ENCODE measurements at regions of chr17 and their contacts with region 1.

Region 1: GRCh38 chr17:29807520-29808351 is 122.3 kb downstream of the SSH2 start:
- DNase-seq: peak; percentile 74
- H3K4me3 ChIP-seq: no peak overlapping the region
- H3K27ac ChIP-seq: no peak overlapping the region
- H3K4me1 ChIP-seq: peaks cover 0 to 4% (median 2%) of the 10 kb centered on the region in 4 donors
- H3K27me3 ChIP-seq: no peaks in the 10 kb centered on the region
- CTCF ChIP-seq: peak; percentile 73 to 83 (median 77)
- EP300 ChIP-seq: no peak
- POLR2A ChIP-seq: no peak

Region 2: DNA sequence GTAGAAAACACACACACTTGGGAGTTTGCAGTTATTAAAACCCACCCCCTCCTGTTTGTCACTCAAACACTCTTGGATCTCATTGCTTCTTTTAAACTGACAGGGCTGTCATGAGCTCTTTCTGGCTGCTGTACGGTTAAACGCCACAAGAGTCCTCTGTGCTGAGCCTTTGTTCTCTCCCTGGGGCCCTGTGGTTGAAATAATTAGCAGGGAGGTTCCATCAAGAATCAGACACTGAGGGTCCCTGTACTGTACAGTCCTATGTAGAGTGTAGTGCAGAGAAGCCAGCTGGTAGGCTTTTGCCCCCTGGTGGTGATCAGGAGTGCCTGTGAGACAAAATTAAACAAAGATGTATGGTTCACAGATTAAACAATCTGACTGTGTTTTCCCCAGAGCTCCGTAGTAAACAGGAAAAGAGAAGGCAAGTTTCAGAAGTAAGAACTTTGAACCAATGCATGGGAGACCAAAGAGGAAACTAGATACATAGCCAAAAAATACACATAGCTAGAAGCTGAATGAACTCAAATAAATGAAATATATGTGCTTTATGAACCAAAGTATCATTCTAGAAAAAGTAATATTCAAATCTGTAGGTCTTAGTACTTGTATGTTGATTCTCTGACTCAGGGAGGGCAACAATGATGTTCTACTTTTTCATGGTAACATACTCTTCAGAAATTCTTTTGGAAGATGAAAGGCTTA is 123.6 kb after region 1 on chr17:
- in situ Hi-C with region 1: loop called (anchors 5 to 10 kb)
- intact Hi-C with region 1: loop called (anchors 2 kb)
- DNase-seq: peak; percentile 70
- H3K4me3 ChIP-seq: peak overlapping the region in 2 of 4 donors; percentile 67 to 70
- H3K27ac ChIP-seq: peak overlapping the region; percentile 88 to 99 (median 94)
- H3K4me1 ChIP-seq: peaks cover 5 to 36% (median 27%) of the 10 kb centered on the region in 4 donors
- H3K27me3 ChIP-seq: no peaks in the 10 kb centered on the region
- CTCF ChIP-seq: peak; percentile 87 to 89 (median 88)
- EP300 ChIP-seq: no peak
- POLR2A ChIP-seq: no peak

Region 3: DNA sequence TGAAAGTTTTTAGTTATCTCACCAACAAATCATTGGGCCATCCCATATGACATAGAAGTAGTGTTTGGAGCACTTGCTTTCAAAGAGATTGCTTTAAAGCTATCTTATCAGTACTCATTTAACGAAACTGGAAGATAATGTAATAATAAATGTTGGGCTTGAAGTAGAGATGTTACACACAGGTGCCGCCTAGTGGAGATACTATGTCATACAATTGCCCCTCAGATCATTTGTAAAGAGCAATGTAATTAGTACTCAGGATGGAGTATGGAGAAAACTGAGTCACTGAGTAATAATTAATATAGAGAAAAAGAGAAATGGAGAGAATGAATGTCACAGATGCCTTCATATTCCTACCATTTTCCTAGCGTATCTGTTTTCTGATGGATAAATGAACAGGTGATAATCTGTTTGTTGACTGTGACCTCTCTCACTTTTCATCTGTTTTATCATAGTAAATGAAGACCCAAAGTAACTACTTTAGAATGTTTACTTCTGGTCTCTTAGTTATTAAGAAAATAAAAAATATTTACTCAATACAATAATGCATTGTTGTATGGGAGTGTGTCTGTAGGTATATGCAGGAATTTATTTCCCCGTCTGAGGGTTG is 214.1 kb after region 1 on chr17:
- in situ Hi-C with region 1: loop called in 1 of 4 experiments (anchors 10 kb)
- intact Hi-C with region 1: no loop called
- DNase-seq: no peak
- H3K4me3 ChIP-seq: no peak overlapping the region
- H3K27ac ChIP-seq: no peak overlapping the region
- H3K4me1 ChIP-seq: no peaks in the 10 kb centered on the region
- H3K27me3 ChIP-seq: no peaks in the 10 kb centered on the region
- CTCF ChIP-seq: peak; percentile 70 to 77 (median 71)
- EP300 ChIP-seq: no peak
- POLR2A ChIP-seq: no peak

Region 4: GRCh38 chr17:30093463-30094147 is 285.9 kb after region 1 on chr17:
- in situ Hi-C with region 1: loop called in 2 of 4 experiments (anchors 25 kb)
- intact Hi-C with region 1: loop called (anchors 5 kb)
- DNase-seq: peak; percentile 22
- H3K4me3 ChIP-seq: no peak overlapping the region
- H3K27ac ChIP-seq: no peak overlapping the region
- H3K4me1 ChIP-seq: peaks cover 0 to 8% (median 6%) of the 10 kb centered on the region in 4 donors
- H3K27me3 ChIP-seq: peaks cover 4% of the 10 kb centered on the region
- CTCF ChIP-seq: peak; percentile 76 to 88 (median 85)
- EP300 ChIP-seq: no peak
- POLR2A ChIP-seq: no peak

Measured in transverse colon (tissue), 4 donors.